B cell (primary cell): ENCODE measurements at regions of chr9 and their contacts with region 1.

Region 1: GRCh38 chr9:33167046-33167808 is at the start of gene B4GALT1:
- DNase-seq: peak; percentile 96
- ATAC-seq: peak; percentile 77
- H3K4me3 ChIP-seq: peak within 1 kb of the TSS; percentile 95 to 99 (median 98)
- H3K4me3 Mint-ChIP-seq: peak within 1 kb of the TSS; percentile 99
- H3K27ac ChIP-seq: peak within 1 kb of the TSS; percentile 90 to 92
- H3K27ac Mint-ChIP-seq: peak within 1 kb of the TSS; percentile 100
- H3K4me1 ChIP-seq: peaks cover 46 to 59% of the 10 kb centered on the region in 2 donors
- H3K4me1 Mint-ChIP-seq: peaks cover 58% of the 10 kb centered on the region
- H3K27me3 ChIP-seq: no peaks in the 10 kb centered on the region
- H3K27me3 Mint-ChIP-seq: no peaks in the 10 kb centered on the region
- CTCF ChIP-seq: no peak
- total RNA-seq, gene B4GALT1: 197 and 201 TPM in 2 replicates

Region 2: GRCh38 chr9:33076358-33077004 is 90.7 kb before region 1 on chr9 and contains the start of gene SMU1:
- CTCF ChIA-PET with region 1: interaction called, 21 read pairs
- POLR2A ChIA-PET with region 1: interaction called, 4 read pairs
- intact Hi-C with region 1: loop called (anchors 1 kb)
- DNase-seq: peak; percentile 97
- ATAC-seq: peak; percentile 98
- H3K4me3 ChIP-seq: peak within 1 kb of the TSS; percentile 72 to 87 (median 84)
- H3K4me3 Mint-ChIP-seq: peak within 1 kb of the TSS; percentile 97
- H3K27ac ChIP-seq: peak within 1 kb of the TSS; percentile 91 to 95
- H3K27ac Mint-ChIP-seq: peak within 1 kb of the TSS; percentile 98
- H3K4me1 ChIP-seq: peaks cover 17 to 29% of the 10 kb centered on the region in 2 donors
- H3K4me1 Mint-ChIP-seq: peaks cover 34% of the 10 kb centered on the region
- H3K27me3 ChIP-seq: no peaks in the 10 kb centered on the region
- H3K27me3 Mint-ChIP-seq: no peaks in the 10 kb centered on the region
- CTCF ChIP-seq: no peak
- total RNA-seq, gene SMU1: 26.3 and 27.4 TPM in 2 replicates

Region 3: DNA sequence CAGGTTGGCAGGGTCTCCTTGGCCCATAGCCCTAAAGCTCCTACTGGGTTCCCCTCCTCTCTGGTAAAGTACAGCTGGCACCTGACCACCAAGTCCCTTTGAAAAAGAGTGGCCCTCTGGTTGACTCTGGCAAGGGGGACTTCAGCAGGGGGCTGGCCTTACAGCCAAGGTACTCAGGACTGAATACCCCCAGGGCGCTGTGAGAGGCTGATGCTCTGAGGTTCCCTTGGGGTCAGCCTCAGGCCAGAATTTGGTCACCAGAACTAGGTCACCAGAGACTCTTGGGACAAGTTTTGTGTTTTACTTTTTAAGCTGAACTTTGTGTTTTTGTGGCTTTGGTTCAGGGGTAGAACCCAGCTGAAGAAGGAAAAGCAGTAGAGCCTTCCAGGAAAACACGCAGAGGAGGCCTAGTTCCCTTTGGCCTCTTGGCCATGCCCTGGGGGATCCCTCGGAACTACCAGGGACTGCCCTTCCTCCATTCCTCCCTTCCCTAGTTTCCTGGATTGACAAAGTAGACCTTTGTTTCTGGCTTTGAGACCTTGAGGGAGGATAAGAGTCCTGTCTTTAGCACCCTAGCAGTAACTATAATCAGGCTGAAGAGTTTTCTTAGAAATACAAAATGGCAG is 67.4 kb before region 1 on chr9:
- CTCF ChIA-PET with region 1: no interaction called
- POLR2A ChIA-PET with region 1: no interaction called
- intact Hi-C with region 1: no loop called
- DNase-seq: no peak
- ATAC-seq: no peak
- H3K4me3 ChIP-seq: no peak overlapping the region
- H3K4me3 Mint-ChIP-seq: no peak overlapping the region
- H3K27ac ChIP-seq: no peak overlapping the region
- H3K27ac Mint-ChIP-seq: no peak overlapping the region
- H3K4me1 ChIP-seq: no peaks in the 10 kb centered on the region
- H3K4me1 Mint-ChIP-seq: peaks cover 4% of the 10 kb centered on the region
- H3K27me3 ChIP-seq: no peaks in the 10 kb centered on the region
- H3K27me3 Mint-ChIP-seq: no peaks in the 10 kb centered on the region
- CTCF ChIP-seq: no peak

Region 4: DNA sequence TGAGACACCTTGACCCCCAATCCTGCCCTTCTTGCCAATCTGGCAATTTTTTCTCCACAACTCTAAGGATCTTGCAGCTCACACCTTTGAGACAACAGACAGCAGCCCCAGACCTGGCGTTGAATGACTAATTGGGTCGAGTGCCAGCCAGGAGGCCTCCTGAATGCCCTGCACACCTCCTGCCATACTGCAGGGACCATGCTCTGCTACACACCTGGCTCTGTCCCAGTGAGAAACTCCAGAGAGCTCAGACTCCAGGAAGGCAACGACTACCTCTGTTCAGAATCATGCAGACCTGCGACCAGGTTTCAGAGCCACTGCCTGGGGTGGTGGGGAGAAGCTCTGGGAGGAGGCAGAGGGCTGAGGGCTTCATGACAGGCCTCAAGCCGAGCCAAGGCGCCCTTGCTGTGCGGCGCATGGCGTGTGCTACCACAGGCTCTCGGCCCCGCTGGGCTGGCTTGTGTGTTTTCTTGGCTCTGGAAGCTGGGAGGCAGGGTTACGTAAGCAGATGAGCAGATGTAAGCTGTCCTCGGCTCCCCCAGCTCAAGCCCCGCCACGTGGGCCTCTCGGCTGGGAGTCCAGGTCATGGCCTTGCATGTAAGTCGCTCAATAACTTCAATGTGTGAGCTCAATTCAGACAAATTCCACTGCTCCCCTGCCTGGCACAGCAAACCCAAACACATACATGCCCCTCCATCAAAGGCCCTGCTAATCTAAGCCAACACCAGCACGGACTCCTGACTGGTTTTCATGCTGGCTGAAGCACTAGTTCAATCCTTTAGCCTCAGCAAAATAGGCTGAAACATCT is 27.6 kb before region 1 on chr9:
- CTCF ChIA-PET with region 1: interaction called, 7 read pairs
- POLR2A ChIA-PET with region 1: interaction called, 44 read pairs
- intact Hi-C with region 1: loop called (anchors 1 kb)
- DNase-seq: no peak
- ATAC-seq: no peak
- H3K4me3 ChIP-seq: peak overlapping the region in 1 of 5 experiments; percentile 13
- H3K4me3 Mint-ChIP-seq: peak overlapping the region; percentile 77
- H3K27ac ChIP-seq: peak overlapping the region; percentile 87
- H3K27ac Mint-ChIP-seq: peak overlapping the region; percentile 93
- H3K4me1 ChIP-seq: peaks cover 99 to 100% of the 10 kb centered on the region in 2 donors
- H3K4me1 Mint-ChIP-seq: peaks cover 96% of the 10 kb centered on the region
- H3K27me3 ChIP-seq: no peaks in the 10 kb centered on the region
- H3K27me3 Mint-ChIP-seq: no peaks in the 10 kb centered on the region
- CTCF ChIP-seq: no peak

Region 5: DNA sequence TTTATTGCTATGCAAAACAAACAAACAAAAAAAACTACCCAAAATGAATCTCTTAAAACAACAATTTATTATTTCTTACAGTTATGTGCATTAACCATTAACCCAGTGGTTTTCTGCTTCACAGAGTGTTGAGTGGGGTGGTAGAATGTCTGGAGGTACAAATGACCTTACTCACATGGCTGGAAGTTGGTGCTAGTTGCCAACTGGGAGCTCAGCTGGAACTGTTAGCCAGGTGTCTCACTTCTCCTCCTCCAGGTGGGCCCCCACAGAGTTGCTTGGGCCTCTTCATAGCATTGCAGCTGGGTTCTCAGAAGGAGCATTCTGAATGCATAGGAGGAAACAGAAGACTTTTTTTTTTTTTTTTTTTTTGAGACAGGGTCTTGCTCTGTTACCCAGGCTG is 10.4 kb after region 1 on chr9:
- CTCF ChIA-PET with region 1: interaction called, 11 read pairs
- POLR2A ChIA-PET with region 1: no interaction called
- intact Hi-C with region 1: no loop called
- DNase-seq: no peak
- ATAC-seq: no peak
- H3K4me3 ChIP-seq: no peak overlapping the region
- H3K4me3 Mint-ChIP-seq: no peak overlapping the region
- H3K27ac ChIP-seq: no peak overlapping the region
- H3K27ac Mint-ChIP-seq: peak overlapping the region; percentile 10
- H3K4me1 ChIP-seq: no peaks in the 10 kb centered on the region
- H3K4me1 Mint-ChIP-seq: peaks cover 6% of the 10 kb centered on the region
- H3K27me3 ChIP-seq: no peaks in the 10 kb centered on the region
- H3K27me3 Mint-ChIP-seq: no peaks in the 10 kb centered on the region
- CTCF ChIP-seq: no peak

Region 6: GRCh38 chr9:33264473-33265177 is 97.4 kb after region 1 on chr9 and contains the starts of genes BAG1 and CHMP5:
- CTCF ChIA-PET with region 1: no interaction called
- POLR2A ChIA-PET with region 1: no interaction called
- intact Hi-C with region 1: loop called (anchors 1 kb)
- DNase-seq: peak; percentile 99
- ATAC-seq: peak; percentile 97
- H3K4me3 ChIP-seq: peak within 1 kb of the TSS; percentile 89 to 99 (median 97)
- H3K4me3 Mint-ChIP-seq: peak within 1 kb of the TSS; percentile 88
- H3K27ac ChIP-seq: peak within 1 kb of the TSS; percentile 92 to 96
- H3K27ac Mint-ChIP-seq: peak within 1 kb of the TSS; percentile 98
- H3K4me1 ChIP-seq: peaks cover 19 to 23% of the 10 kb centered on the region in 2 donors
- H3K4me1 Mint-ChIP-seq: peaks cover 39% of the 10 kb centered on the region
- H3K27me3 ChIP-seq: no peaks in the 10 kb centered on the region
- H3K27me3 Mint-ChIP-seq: no peaks in the 10 kb centered on the region
- CTCF ChIP-seq: peak; percentile 34
- total RNA-seq, gene BAG1: 53.8 and 60.2 TPM in 2 replicates
- total RNA-seq, gene CHMP5: 28.2 and 29.7 TPM in 2 replicates